T-cell (primary cell): ENCODE measurements at regions of chr16 and their contacts with region 1.

Region 1: GRCh38 chr16:10969615-10970014 is 25.3 kb downstream of the CLEC16A start:
- DNase-seq: no peak
- ATAC-seq: no peak
- H3K4me3 ChIP-seq: no peak overlapping the region
- H3K4me3 Mint-ChIP-seq: no peak overlapping the region
- H3K27ac ChIP-seq: no peak overlapping the region
- H3K27ac Mint-ChIP-seq: no peak overlapping the region
- H3K4me1 ChIP-seq: peaks cover 4 to 28% of the 10 kb centered on the region in 2 experiments
- H3K4me1 Mint-ChIP-seq: peaks cover 38 to 42% (median 40%) of the 10 kb centered on the region in 3 donors
- H3K27me3 ChIP-seq: no peaks in the 10 kb centered on the region
- H3K27me3 Mint-ChIP-seq: no peaks in the 10 kb centered on the region

Region 2: GRCh38 chr16:8996891-8997290 is 1972.7 kb before region 1 on chr16:
- CTCF ChIA-PET with region 1: no interaction called
- POLR2A ChIA-PET with region 1: interaction called in 1 of 2 experiments, 10 read pairs
- DNase-seq: no peak
- ATAC-seq: no peak
- H3K4me3 ChIP-seq: no peak overlapping the region
- H3K4me3 Mint-ChIP-seq: no peak overlapping the region
- H3K27ac ChIP-seq: no peak overlapping the region
- H3K27ac Mint-ChIP-seq: no peak overlapping the region
- H3K4me1 ChIP-seq: no peaks in the 10 kb centered on the region
- H3K4me1 Mint-ChIP-seq: no peaks in the 10 kb centered on the region
- H3K27me3 ChIP-seq: no peaks in the 10 kb centered on the region
- H3K27me3 Mint-ChIP-seq: no peaks in the 10 kb centered on the region

Region 3: DNA sequence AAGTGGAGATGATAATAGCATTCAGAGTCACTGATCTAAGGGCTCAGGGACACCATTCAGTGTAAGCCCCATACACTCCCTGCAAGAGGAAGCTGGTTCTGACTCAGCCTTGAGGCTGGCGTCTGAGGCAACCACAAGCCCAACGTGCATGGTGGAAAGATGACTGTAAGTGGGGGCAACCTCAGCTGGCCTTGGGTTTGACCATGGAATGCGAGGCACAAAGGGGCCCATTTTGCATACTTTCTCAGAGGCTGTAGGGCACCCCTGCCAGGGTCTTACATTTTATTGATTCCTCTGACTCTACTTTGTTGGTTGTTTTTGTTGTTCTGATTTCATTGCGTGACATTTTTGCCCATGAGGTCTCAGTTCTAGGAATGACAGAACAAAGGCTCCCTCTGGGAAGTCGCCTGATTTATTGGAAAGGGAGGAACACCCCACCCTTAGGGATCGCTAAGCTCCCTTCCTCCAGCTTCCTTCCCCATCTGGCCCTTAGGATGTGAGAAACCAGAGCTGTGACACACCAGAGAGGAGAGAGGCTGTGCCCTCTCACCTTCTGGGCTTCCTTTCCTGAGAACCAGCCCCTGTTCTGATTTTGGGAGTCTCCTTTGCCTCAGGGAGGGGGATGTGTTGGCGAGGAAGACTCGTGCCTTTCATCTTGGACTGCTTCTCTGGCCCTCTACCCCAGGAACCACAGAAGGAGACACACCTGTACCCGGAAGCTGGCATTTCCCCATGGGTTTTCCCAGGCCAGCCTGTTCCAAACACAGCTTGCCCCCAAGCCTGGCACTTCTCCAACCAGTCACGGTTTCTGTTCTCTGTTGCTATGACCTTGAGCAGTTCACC is 98.2 kb before region 1 on chr16:
- CTCF ChIA-PET with region 1: no interaction called
- POLR2A ChIA-PET with region 1: no interaction called
- DNase-seq: peak in 13 of 35 experiments; percentile 10 to 59 (median 21)
- ATAC-seq: peak; percentile 66 to 86 (median 78)
- H3K4me3 ChIP-seq: no peak overlapping the region
- H3K4me3 Mint-ChIP-seq: no peak overlapping the region
- H3K27ac ChIP-seq: peak overlapping the region; percentile 51
- H3K27ac Mint-ChIP-seq: peak overlapping the region in 1 of 2 donors; percentile 51
- H3K4me1 ChIP-seq: peaks cover 0 to 59% of the 10 kb centered on the region in 2 experiments
- H3K4me1 Mint-ChIP-seq: peaks cover 33 to 64% (median 43%) of the 10 kb centered on the region in 3 donors
- H3K27me3 ChIP-seq: no peaks in the 10 kb centered on the region
- H3K27me3 Mint-ChIP-seq: peaks cover 31 to 35% of the 10 kb centered on the region in 2 donors

Region 4: DNA sequence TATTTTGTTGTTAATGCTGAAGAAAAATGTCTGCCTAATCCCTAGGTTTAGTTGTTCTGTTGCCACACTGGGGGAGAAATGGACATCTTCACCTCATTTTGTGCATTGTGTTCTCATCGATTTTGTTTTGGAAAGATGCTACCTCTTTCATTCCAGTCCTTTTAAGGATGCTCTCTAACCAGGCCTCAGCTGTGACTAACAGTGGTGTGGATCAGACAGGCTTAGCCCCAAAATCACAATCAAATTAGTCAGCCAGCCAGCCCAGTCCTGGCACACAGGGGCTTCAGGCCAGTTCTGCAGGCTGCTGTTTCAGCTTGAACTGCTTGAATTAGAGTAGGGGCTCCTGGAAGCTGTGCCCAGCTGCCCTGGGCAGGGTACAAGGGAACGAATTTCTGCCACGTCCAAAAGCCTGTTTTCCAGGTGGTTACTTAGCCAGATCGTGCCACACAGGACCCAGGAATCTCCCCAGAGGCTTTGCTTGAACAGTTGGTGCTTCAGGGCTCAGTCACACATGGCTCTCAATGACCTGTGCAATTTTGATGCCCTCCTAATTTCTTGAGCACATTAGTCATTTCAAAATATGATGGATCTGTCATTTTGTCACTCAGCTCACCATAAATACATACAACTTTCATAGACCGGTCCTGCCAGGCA is 35.5 kb after region 1 on chr16:
- CTCF ChIA-PET with region 1: no interaction called
- POLR2A ChIA-PET with region 1: no interaction called
- DNase-seq: no peak
- ATAC-seq: no peak
- H3K4me3 ChIP-seq: no peak overlapping the region
- H3K4me3 Mint-ChIP-seq: no peak overlapping the region
- H3K27ac ChIP-seq: no peak overlapping the region
- H3K27ac Mint-ChIP-seq: no peak overlapping the region
- H3K4me1 ChIP-seq: no peaks in the 10 kb centered on the region
- H3K4me1 Mint-ChIP-seq: peaks cover 0 to 6% (median 0%) of the 10 kb centered on the region in 3 donors
- H3K27me3 ChIP-seq: no peaks in the 10 kb centered on the region
- H3K27me3 Mint-ChIP-seq: no peaks in the 10 kb centered on the region